CD14-positive monocyte (primary cell): ENCODE measurements at regions of chr1 and their contacts with region 1.

Region 1: DNA sequence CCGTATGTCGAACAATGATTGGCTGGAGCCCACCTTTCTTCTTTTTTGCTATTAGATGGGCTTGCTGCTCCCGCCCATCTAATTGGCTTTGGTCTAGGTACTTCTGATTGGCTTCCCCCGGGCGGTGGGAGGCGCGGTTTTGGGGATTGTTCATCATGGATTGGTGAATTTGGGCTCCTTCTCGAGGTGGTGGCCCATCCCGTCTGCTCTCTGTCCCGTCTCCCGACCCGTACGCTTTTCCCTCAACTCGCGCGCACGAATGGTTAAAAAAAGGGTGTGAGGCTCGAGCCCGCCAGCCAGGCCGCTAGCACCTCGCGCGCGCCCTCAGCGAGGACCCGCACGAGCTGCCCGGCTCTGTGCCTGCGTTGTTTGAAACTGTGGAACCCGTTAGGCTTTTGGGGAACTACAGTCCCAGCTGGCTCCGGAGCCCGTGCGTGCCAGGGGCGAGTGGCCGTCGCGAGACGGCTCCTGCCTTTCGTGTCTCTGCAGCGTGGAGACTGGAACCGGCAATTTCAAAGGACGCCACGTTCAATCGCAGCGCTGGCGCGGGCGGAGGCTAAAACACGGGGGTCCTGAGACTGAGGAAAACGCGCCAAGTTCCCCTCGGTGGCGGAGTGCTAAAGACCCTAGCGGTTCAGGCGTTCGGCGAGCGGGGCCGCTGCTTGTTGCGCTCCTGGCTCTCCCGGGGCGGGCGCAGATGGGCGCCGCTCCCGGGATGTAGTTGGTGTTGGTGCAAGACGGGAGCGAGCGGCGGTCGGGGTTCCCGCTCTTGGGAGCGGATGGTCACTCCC is at the start of gene USP1:
- DNase-seq: peak; percentile 98 to 99 (median 99)
- H3K4me3 ChIP-seq: peak within 1 kb of the TSS; percentile 79 to 95 (median 93)
- H3K4me3 Mint-ChIP-seq: peak within 1 kb of the TSS; percentile 97
- H3K27ac ChIP-seq: peak within 1 kb of the TSS; percentile 96 to 98
- H3K27ac Mint-ChIP-seq: peak within 1 kb of the TSS; percentile 99
- H3K4me1 ChIP-seq: peaks cover 16 to 31% of the 10 kb centered on the region in 2 donors
- H3K4me1 Mint-ChIP-seq: peaks cover 34% of the 10 kb centered on the region
- H3K27me3 ChIP-seq: no peaks in the 10 kb centered on the region
- H3K27me3 Mint-ChIP-seq: peaks cover 0 to 2% (median 2%) of the 10 kb centered on the region in 3 donors
- CTCF ChIP-seq: no peak
- polyA plus RNA-seq, gene USP1: 5.3 to 24.0 (median 13.6) TPM

Region 2: DNA sequence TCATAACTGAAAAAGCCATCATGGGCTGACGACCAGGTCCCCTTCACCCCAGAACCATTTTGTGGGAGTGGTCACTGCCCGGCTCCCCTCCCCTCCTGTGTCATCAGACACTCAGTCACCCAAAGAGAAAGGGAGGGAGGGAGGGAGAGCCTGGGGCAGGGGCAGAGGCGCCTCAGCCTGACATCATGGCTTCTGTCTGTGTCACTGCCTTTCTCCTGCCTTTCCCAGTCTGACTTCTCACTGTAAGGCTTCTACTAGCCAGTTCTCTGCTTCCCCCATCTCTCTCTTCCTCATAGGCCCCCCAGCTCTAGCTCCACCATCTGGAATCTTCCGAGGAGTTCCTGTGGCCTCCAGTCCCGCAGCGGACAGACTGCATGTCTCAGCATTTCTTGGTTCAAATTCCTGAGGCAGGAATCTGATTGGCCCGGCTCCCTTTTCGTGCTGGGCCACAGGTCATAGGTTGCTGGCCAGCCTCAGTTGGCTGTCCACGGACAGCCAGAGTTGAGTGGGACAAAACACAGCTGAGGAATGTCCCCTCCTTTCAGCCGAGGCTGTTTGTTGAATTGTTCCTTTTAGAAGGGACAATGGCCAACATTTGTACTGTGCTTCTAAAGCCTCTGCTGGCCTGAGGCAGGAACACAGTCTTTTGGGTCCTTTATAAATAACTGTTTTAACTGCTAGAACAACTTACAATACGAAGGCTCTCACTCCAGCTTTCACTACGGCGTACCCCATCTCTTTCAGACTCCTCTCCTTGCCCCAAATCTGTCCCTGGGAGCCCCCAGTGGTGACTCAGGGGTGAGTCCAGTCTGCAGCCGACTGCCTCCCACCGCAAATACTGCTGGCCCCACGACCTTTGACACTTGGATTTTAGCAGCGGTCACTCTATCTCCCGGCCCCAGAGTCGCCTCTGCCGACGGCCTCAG is 98.7 kb before region 1 on chr1:
- intact Hi-C with region 1: no loop called
- DNase-seq: no peak
- H3K4me3 ChIP-seq: no peak overlapping the region
- H3K4me3 Mint-ChIP-seq: no peak overlapping the region
- H3K27ac ChIP-seq: no peak overlapping the region
- H3K27ac Mint-ChIP-seq: no peak overlapping the region
- H3K4me1 ChIP-seq: no peaks in the 10 kb centered on the region
- H3K4me1 Mint-ChIP-seq: no peaks in the 10 kb centered on the region
- H3K27me3 ChIP-seq: no peaks in the 10 kb centered on the region
- H3K27me3 Mint-ChIP-seq: peaks cover 0 to 6% (median 3%) of the 10 kb centered on the region in 3 donors
- CTCF ChIP-seq: no peak

Region 3: DNA sequence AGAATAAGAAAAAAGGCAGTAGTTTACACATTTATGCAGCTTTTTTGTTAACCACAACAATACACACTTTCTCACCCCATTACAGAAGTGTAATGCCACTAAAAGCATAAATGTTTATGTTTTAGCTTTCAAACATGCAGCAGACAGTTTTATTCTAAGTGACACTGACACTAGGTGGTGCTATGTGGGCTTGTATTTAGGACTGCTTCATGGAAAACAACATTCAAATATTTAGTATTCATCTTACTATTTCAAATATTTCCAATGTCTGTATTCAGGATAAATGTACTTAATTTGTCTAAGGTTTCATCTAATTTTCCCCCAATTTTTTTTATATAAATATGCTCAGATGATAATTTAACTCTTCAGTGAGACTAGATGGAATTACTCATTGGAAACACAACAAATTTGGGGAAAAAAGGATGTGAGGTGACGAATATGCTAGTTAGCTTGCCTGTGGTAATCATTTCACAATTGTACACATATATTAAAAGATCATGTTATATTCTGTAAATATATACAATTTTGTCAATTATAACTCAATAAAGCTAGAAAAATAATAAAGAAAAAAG is 71.6 kb after region 1 on chr1:
- intact Hi-C with region 1: no loop called
- DNase-seq: peak; percentile 17 to 33 (median 29)
- H3K4me3 ChIP-seq: no peak overlapping the region
- H3K4me3 Mint-ChIP-seq: no peak overlapping the region
- H3K27ac ChIP-seq: no peak overlapping the region
- H3K27ac Mint-ChIP-seq: no peak overlapping the region
- H3K4me1 ChIP-seq: no peaks in the 10 kb centered on the region
- H3K4me1 Mint-ChIP-seq: no peaks in the 10 kb centered on the region
- H3K27me3 ChIP-seq: no peaks in the 10 kb centered on the region
- H3K27me3 Mint-ChIP-seq: peaks cover 0 to 3% (median 0%) of the 10 kb centered on the region in 3 donors
- CTCF ChIP-seq: peak; percentile 61

Region 4: GRCh38 chr1:62784509-62785365 is 348.1 kb after region 1 on chr1:
- intact Hi-C with region 1: loop called (anchors 5 kb)
- DNase-seq: peak; percentile 26 to 40 (median 39)
- H3K4me3 ChIP-seq: peak overlapping the region; percentile 72 to 99 (median 79)
- H3K4me3 Mint-ChIP-seq: no peak overlapping the region
- H3K27ac ChIP-seq: peak overlapping the region; percentile 76 to 94
- H3K27ac Mint-ChIP-seq: no peak overlapping the region
- H3K4me1 ChIP-seq: peaks cover 25 to 39% of the 10 kb centered on the region in 2 donors
- H3K4me1 Mint-ChIP-seq: peaks cover 22% of the 10 kb centered on the region
- H3K27me3 ChIP-seq: no peaks in the 10 kb centered on the region
- H3K27me3 Mint-ChIP-seq: peaks cover 0 to 6% (median 2%) of the 10 kb centered on the region in 3 donors
- CTCF ChIP-seq: no peak